ENCODE measurements at regions of chr17 and their contacts with region 1.

Region 1: GRCh38 chr17:27601069-27601975 is 29.7 kb upstream of the LGALS9 start:
- DNase-seq: peak; percentile 85
- H3K4me3 ChIP-seq: no peak overlapping the region
- H3K27ac ChIP-seq: no peak overlapping the region
- H3K4me1 ChIP-seq: no peaks in the 10 kb centered on the region
- H3K27me3 ChIP-seq: no peaks in the 10 kb centered on the region
- CTCF ChIP-seq: peak; percentile 94

Region 2: DNA sequence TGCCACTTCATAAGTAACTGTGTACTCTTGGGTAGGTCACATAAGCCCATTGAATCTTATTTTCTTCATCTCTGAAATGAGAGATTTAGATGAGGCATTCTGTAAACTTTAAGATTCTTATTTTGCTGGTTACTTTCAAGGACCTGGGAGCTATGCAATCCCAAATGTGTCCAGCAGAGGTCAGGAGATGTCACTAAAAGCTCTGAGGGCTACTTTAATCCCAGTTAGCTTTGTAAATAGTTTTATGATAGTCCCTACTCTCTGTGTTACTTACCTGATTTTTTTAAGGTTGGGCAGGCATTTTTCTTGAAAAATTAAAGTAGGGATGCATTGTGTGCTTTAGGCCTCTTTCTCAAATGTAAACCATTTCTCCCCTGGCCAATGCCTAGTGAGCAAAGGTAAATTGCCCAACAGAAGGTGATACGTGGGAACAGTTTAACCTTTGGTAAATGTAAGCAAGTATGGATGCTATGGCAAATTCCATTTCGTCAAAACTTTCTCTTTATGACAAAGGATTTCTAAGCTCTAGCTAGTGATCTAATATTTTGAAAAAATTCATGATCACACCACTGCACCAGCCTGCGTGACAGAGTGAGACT is 364.5 kb before region 1 on chr17:
- CTCF ChIA-PET with region 1: interaction called, 12 read pairs
- POLR2A ChIA-PET with region 1: no interaction called
- intact Hi-C with region 1: loop called (anchors 1 kb)
- DNase-seq: peak; percentile 71
- H3K4me3 ChIP-seq: no peak overlapping the region
- H3K27ac ChIP-seq: no peak overlapping the region
- H3K4me1 ChIP-seq: peaks cover 2% of the 10 kb centered on the region
- H3K27me3 ChIP-seq: no peaks in the 10 kb centered on the region
- CTCF ChIP-seq: peak; percentile 91

Region 3: GRCh38 chr17:27353461-27354050 is 247.8 kb before region 1 on chr17:
- CTCF ChIA-PET with region 1: interaction called, 5 read pairs
- POLR2A ChIA-PET with region 1: no interaction called
- intact Hi-C with region 1: loop called (anchors 2 kb)
- DNase-seq: peak; percentile 91
- H3K4me3 ChIP-seq: peak overlapping the region; percentile 46
- H3K27ac ChIP-seq: peak overlapping the region; percentile 84
- H3K4me1 ChIP-seq: peaks cover 26% of the 10 kb centered on the region
- H3K27me3 ChIP-seq: no peaks in the 10 kb centered on the region
- CTCF ChIP-seq: peak; percentile 66

Region 4: GRCh38 chr17:27455914-27456680 is 145.2 kb before region 1 on chr17 and contains the start of gene KSR1:
- CTCF ChIA-PET with region 1: interaction called, 13 read pairs
- POLR2A ChIA-PET with region 1: no interaction called
- intact Hi-C with region 1: loop called (anchors 1 kb)
- DNase-seq: peak; percentile 86
- H3K4me3 ChIP-seq: peak within 1 kb of the TSS; percentile 91
- H3K27ac ChIP-seq: peak within 1 kb of the TSS; percentile 64
- H3K4me1 ChIP-seq: peaks cover 19% of the 10 kb centered on the region
- H3K27me3 ChIP-seq: no peaks in the 10 kb centered on the region
- CTCF ChIP-seq: peak; percentile 79
- total RNA-seq, gene KSR1: 41.7 and 47.8 TPM in 2 replicates

Region 5: DNA sequence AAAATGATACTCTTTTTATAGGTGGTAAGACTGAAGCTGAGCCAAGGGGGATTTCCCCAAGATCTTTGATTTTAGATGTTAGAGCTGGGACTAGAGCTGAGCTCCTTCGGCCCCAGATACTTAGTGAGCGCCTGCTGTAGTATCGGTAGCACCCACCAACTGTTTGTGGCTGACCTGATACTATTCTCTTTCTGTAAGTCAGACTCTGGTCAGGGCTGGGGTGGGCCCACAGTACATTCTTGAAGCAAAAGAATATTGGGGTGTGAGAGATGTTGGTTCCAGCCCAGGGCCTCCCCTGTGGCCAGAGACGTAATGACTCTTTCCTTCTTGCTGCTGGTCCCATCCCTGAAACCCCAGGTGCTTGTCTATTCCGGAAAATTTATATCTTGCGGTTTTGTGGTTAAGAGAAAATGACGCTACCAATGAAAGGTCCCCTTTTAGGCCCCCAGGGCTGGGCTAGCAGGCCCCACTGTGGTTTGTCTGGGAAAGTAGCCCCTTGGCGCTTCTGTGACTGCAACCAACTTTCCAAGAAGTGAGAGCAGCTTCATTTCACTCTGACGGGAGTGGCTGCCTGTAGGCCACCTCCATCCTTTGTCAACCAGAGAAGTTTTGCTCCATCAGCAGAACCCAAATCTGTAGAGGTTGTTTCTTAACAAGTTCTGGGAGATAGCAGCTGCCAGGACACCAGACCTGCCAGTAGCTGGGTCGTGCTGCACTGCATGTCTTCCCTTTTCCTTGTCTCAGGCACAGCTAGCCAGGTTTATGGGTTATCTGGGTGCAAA is 56.8 kb before region 1 on chr17:
- CTCF ChIA-PET with region 1: no interaction called
- POLR2A ChIA-PET with region 1: no interaction called
- intact Hi-C with region 1: loop called (anchors 10 kb)
- DNase-seq: no peak
- H3K4me3 ChIP-seq: no peak overlapping the region
- H3K27ac ChIP-seq: no peak overlapping the region
- H3K4me1 ChIP-seq: peaks cover 3% of the 10 kb centered on the region
- H3K27me3 ChIP-seq: no peaks in the 10 kb centered on the region
- CTCF ChIP-seq: no peak

Region 6: DNA sequence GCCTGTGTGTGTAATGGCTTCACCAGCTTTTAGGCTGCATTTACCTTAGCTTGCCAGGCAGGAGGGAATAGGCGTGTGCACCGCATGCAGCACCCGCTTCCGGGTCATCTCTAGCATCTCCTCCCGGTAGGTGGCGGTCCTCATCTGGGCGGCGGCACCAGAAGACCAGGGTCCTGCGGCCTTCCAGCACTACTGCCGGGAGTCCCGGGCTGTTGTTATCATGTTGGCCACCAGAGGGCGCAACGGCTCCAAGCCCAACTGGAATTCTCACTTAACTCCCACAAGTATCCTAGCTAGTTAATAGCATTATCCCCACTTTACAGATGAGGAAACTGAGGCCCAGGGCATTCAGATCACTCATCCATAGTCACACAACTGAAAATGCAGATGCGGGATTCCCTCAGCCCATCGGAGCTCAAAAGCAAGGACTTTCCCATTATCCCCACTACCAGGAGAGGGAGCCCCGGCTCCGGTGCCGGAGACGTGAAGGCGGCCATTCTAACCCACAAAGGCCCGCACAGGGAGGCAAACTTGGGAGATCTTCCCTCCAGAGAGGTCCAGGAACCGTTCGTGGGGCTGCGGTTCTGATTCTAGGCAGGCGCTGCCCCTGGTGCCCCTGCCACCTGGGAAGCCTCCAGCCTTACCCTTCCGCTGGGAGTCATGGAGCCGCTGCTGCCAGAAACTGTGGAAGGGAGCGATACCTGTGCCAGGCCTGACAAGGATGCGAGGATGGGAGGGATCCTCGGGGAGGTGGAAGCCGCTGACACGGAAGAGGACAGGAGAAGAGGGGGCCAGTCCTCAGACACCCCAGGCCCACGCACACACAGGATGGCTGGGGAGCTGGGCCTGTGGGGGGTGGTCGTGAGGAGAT is 53.6 kb after region 1 on chr17:
- CTCF ChIA-PET with region 1: no interaction called
- POLR2A ChIA-PET with region 1: no interaction called
- intact Hi-C with region 1: loop called (anchors 2 kb)
- DNase-seq: peak; percentile 77
- H3K4me3 ChIP-seq: no peak overlapping the region
- H3K27ac ChIP-seq: no peak overlapping the region
- H3K4me1 ChIP-seq: no peaks in the 10 kb centered on the region
- H3K27me3 ChIP-seq: no peaks in the 10 kb centered on the region
- CTCF ChIP-seq: peak; percentile 95

Measured in A673 (cell line).